ENCODE measurements at regions of chr17 and their contacts with region 1.

Region 1: GRCh38 chr17:2041561-2042366 is at the start of gene OVCA2:
- DNase-seq: peak; percentile 96 to 99 (median 97)
- ATAC-seq: peak; percentile 92
- H3K4me3 ChIP-seq: peak within 1 kb of the TSS; percentile 73
- H3K4me3 Mint-ChIP-seq: peak within 1 kb of the TSS; percentile 92
- H3K27ac ChIP-seq: peak within 1 kb of the TSS; percentile 83 to 88
- H3K27ac Mint-ChIP-seq: peak within 1 kb of the TSS; percentile 86
- H3K4me1 ChIP-seq: peaks cover 29% of the 10 kb centered on the region
- H3K4me1 Mint-ChIP-seq: peaks cover 18% of the 10 kb centered on the region
- H3K27me3 ChIP-seq: no peaks in the 10 kb centered on the region
- H3K27me3 Mint-ChIP-seq: no peaks in the 10 kb centered on the region
- CTCF ChIP-seq: peak; percentile 54
- total RNA-seq, gene OVCA2: 34.4 to 35.1 TPM

Region 2: DNA sequence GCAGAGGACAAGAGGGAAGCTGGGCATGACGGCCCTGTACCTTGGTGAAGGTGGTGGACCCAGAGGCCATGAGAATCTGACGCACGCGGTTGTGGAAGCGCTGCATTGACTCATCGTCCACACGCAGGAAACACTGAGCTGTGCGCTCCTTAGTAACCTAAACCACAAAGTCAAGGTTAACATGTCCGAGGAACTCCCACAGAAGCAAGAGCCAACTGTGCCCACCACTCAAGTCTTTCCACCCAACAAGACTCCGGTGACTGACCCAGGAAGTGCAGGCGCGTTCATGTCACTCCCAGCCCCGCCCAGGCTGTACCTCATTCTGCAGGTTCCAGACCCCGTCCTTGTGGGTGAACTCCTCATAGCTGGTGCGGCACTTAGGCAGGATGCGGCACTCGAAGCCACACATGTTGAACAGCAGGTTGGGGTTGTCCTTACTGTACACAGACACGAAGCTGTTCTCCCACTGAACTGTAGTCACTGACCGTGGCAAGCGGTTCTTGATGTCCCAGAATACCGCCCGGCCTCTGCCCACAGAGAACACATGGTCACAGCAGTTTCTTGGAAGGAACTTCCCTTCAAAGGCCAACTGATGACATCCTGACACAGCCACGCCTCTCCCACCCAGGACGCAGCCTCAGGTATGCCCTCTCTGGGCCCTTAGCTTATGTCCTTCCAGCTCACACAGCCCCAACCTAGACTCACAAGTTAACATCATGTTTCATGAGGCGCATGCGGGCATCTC is 368.6 kb before region 1 on chr17:
- CTCF ChIA-PET with region 1: no interaction called
- POLR2A ChIA-PET with region 1: no interaction called
- intact Hi-C with region 1: loop called in 1 of 2 experiments (anchors 5 kb)
- DNase-seq: peak in 6 of 14 experiments; percentile 21 to 63 (median 40)
- ATAC-seq: peak; percentile 46
- H3K4me3 ChIP-seq: no peak overlapping the region
- H3K4me3 Mint-ChIP-seq: no peak overlapping the region
- H3K27ac ChIP-seq: no peak overlapping the region
- H3K27ac Mint-ChIP-seq: peak overlapping the region; percentile 38
- H3K4me1 ChIP-seq: peaks cover 14% of the 10 kb centered on the region
- H3K4me1 Mint-ChIP-seq: peaks cover 38% of the 10 kb centered on the region
- H3K27me3 ChIP-seq: no peaks in the 10 kb centered on the region
- H3K27me3 Mint-ChIP-seq: no peaks in the 10 kb centered on the region
- CTCF ChIP-seq: no peak

Region 3: DNA sequence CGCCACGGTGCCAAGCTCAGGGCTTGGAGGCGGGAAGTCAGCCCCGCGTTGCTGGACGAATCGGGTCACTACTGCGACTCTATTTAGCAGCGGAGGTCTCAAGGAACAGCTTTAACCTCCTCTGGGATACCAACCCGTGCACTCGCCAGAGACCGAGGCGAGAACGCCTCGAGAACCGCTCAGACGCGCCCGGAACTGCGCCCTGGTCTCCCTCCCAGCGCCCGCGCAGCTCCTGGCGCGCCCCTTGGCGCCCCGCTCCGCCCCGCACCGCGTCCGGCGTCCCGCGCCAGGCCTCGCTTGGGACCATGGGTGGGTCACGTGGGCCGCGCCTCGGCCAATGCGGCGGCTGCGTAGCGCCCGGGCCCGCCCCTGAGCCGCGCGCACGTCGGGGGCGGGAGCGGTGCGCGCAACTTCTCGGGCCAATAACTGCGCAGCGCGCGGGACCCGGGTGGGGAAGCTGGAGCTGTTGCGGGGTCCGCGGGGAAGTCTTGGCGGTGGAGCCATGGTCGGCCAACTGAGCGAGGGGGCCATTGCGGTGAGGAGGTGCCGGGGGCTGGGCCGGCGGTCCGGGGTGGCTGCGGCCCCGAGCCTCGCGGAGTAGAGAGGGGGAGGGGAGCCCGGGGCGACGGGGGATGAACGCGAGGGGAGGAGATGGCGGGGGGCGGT is 212.0 kb before region 1 on chr17 and contains the starts of genes RPA1 and SMYD4:
- CTCF ChIA-PET with region 1: no interaction called
- POLR2A ChIA-PET with region 1: interaction called, 3 read pairs
- intact Hi-C with region 1: loop called in 1 of 2 experiments (anchors 5 kb)
- DNase-seq: peak; percentile 71 to 95 (median 84)
- ATAC-seq: peak; percentile 98
- H3K4me3 ChIP-seq: peak within 1 kb of the TSS; percentile 87
- H3K4me3 Mint-ChIP-seq: peak within 1 kb of the TSS; percentile 99
- H3K27ac ChIP-seq: peak within 1 kb of the TSS; percentile 61 to 81
- H3K27ac Mint-ChIP-seq: peak within 1 kb of the TSS; percentile 90
- H3K4me1 ChIP-seq: peaks cover 51% of the 10 kb centered on the region
- H3K4me1 Mint-ChIP-seq: peaks cover 66% of the 10 kb centered on the region
- H3K27me3 ChIP-seq: no peaks in the 10 kb centered on the region
- H3K27me3 Mint-ChIP-seq: no peaks in the 10 kb centered on the region
- CTCF ChIP-seq: no peak
- total RNA-seq, gene RPA1: 38.6 to 38.7 TPM
- total RNA-seq, gene SMYD4: 9.3 to 10.6 TPM

Region 4: DNA sequence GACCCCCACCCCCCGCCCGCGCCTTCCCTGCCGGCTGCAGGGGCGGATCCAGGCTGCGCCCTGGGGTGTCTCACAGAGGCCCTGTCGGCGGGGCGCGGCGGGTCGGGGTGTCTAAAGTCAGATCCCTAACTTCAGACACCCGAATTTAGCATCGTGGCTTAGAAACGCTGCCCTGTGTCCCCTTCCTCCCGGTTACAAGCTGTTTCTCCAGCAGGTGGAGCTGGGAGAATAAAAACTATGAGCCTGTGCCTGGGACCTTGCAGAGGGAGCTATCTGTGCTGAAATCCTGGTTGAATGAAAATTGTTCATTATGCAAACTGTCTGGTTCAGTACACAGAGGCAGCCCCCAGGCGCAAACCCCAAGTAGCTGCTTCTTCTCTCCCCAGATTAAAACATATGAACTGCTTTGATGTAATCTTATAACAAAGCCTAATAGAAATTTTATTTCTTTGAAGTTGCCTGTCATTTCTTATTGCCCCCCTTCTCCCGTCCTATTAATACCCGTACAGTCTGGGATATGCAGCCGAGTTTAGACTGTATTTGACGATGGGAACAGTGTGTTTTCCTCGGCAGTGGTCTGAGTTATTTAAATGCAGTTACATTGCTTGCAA is 133.0 kb before region 1 on chr17:
- CTCF ChIA-PET with region 1: no interaction called
- POLR2A ChIA-PET with region 1: no interaction called
- intact Hi-C with region 1: loop called in 1 of 2 experiments (anchors 5 kb)
- DNase-seq: peak in 11 of 14 experiments; percentile 4 to 55 (median 23)
- ATAC-seq: peak; percentile 54
- H3K4me3 ChIP-seq: peak overlapping the region; percentile 34
- H3K4me3 Mint-ChIP-seq: peak overlapping the region; percentile 68
- H3K27ac ChIP-seq: no peak overlapping the region
- H3K27ac Mint-ChIP-seq: no peak overlapping the region
- H3K4me1 ChIP-seq: peaks cover 13% of the 10 kb centered on the region
- H3K4me1 Mint-ChIP-seq: peaks cover 15% of the 10 kb centered on the region
- H3K27me3 ChIP-seq: peaks cover 51 to 56% of the 10 kb centered on the region in 2 experiments
- H3K27me3 Mint-ChIP-seq: peaks cover 76% of the 10 kb centered on the region
- CTCF ChIP-seq: peak; percentile 41

Region 5: DNA sequence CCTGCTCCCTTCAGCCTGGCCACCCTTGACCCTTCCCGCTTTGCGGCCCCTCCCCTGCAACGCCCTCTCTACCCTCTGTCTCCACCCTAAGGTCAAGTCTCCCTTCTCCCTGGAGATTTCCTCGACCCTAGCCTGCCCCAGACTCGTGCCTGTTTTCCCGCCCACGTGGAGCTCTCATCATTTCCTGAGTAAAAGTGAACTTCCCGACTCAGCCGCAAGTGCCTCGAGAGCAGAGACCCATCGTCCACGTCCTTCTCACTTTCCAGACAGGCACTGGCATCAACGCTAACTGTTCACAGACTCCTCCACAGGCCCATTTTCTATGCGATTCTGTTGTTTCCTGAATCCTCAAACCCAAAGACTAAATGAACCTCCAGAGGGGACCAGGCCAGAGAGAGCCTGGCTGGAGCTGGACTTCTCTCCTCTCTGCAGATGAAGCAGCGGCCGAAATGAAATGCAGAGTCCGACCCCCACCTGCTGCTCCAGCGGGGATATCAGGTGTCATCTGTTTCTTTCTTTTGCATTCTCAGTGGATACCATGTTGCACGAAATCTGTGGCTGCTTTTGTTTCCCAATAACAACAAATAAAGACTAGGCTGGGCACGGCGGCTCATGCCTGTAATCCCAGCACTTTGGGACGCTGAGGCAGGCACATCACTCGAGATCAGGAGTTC is 69.1 kb before region 1 on chr17:
- CTCF ChIA-PET with region 1: no interaction called
- POLR2A ChIA-PET with region 1: no interaction called
- intact Hi-C with region 1: no loop called
- DNase-seq: no peak
- ATAC-seq: no peak
- H3K4me3 ChIP-seq: no peak overlapping the region
- H3K4me3 Mint-ChIP-seq: no peak overlapping the region
- H3K27ac ChIP-seq: no peak overlapping the region
- H3K27ac Mint-ChIP-seq: no peak overlapping the region
- H3K4me1 ChIP-seq: peaks cover 13% of the 10 kb centered on the region
- H3K4me1 Mint-ChIP-seq: peaks cover 18% of the 10 kb centered on the region
- H3K27me3 ChIP-seq: peaks cover 10 to 14% of the 10 kb centered on the region in 2 experiments
- H3K27me3 Mint-ChIP-seq: peaks cover 58% of the 10 kb centered on the region
- CTCF ChIP-seq: no peak

Region 6: GRCh38 chr17:2392252-2393173 is 350.7 kb after region 1 on chr17:
- CTCF ChIA-PET with region 1: no interaction called
- POLR2A ChIA-PET with region 1: no interaction called
- intact Hi-C with region 1: loop called in 1 of 2 experiments (anchors 5 kb)
- DNase-seq: peak; percentile 93 to 99 (median 97)
- ATAC-seq: peak; percentile 64
- H3K4me3 ChIP-seq: peak overlapping the region; percentile 94
- H3K4me3 Mint-ChIP-seq: peak overlapping the region; percentile 99
- H3K27ac ChIP-seq: peak overlapping the region; percentile 98 to 100
- H3K27ac Mint-ChIP-seq: peak overlapping the region; percentile 99
- H3K4me1 ChIP-seq: peaks cover 67% of the 10 kb centered on the region
- H3K4me1 Mint-ChIP-seq: peaks cover 66% of the 10 kb centered on the region
- H3K27me3 ChIP-seq: no peaks in the 10 kb centered on the region
- H3K27me3 Mint-ChIP-seq: no peaks in the 10 kb centered on the region
- CTCF ChIP-seq: no peak